Dendritic cell treated with granulocyte-macrophage colony-stimulating factor and Interleukin-4, amounts not matched to agents 40 ng/mL and 50 ng/mL, for 4 days (primary cell): ENCODE measurements at regions of chr4 and their contacts with region 1.

Region 1: DNA sequence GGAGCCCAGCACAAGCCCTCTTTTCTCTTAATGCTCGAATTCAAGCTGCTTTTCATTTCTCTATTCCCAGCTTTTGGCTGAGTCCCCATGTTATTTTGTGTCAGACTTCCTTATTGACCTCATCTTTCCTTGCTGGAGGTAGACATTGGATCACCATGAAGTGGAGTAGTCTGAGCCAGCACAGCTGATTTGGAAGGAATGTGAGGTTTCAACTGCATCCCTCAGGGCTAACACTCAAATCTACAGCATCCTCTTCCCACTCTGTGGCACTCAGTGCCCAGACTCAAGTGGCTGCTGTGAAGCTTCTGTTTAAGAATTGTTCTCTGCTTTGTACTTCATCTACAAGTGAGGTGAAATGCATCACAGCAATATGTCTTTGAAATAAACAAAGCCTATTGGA is 6.3 kb downstream of the TRAPPC11 start:
- H3K4me3 Mint-ChIP-seq: no peak overlapping the region
- H3K27ac Mint-ChIP-seq: no peak overlapping the region
- H3K4me1 Mint-ChIP-seq: peaks cover 11% of the 10 kb centered on the region
- H3K27me3 Mint-ChIP-seq: no peaks in the 10 kb centered on the region

Region 2: GRCh38 chr4:183287677-183288076 is 377.8 kb before region 1 on chr4:
- intact Hi-C with region 1: no loop called
- H3K4me3 Mint-ChIP-seq: no peak overlapping the region
- H3K27ac Mint-ChIP-seq: no peak overlapping the region
- H3K4me1 Mint-ChIP-seq: no peaks in the 10 kb centered on the region
- H3K27me3 Mint-ChIP-seq: no peaks in the 10 kb centered on the region

Region 3: GRCh38 chr4:183544109-183544508 is 121.3 kb before region 1 on chr4:
- intact Hi-C with region 1: no loop called
- H3K4me3 Mint-ChIP-seq: no peak overlapping the region
- H3K27ac Mint-ChIP-seq: no peak overlapping the region
- H3K4me1 Mint-ChIP-seq: peaks cover 5% of the 10 kb centered on the region
- H3K27me3 Mint-ChIP-seq: peaks cover 5% of the 10 kb centered on the region

Region 4: GRCh38 chr4:183714626-183715025 is 49.2 kb after region 1 on chr4:
- intact Hi-C with region 1: loop called (anchors 5 kb)
- H3K4me3 Mint-ChIP-seq: no peak overlapping the region
- H3K27ac Mint-ChIP-seq: no peak overlapping the region
- H3K4me1 Mint-ChIP-seq: no peaks in the 10 kb centered on the region
- H3K27me3 Mint-ChIP-seq: no peaks in the 10 kb centered on the region